ENCODE measurements at regions of chr18 and their contacts with region 1.

Region 1: GRCh38 chr18:71784777-71785176 is 759.4 kb downstream of the CBLN2 start:
- DNase-seq: peak; percentile 51
- H3K4me3 ChIP-seq: no peak overlapping the region
- H3K27ac ChIP-seq: no peak overlapping the region
- H3K4me1 ChIP-seq: no peaks in the 10 kb centered on the region
- H3K27me3 ChIP-seq: no peaks in the 10 kb centered on the region
- CTCF ChIP-seq: peak; percentile 41 to 62
- POLR2A ChIP-seq: no peak

Region 2: GRCh38 chr18:70491734-70492348 is 1292.9 kb before region 1 on chr18:
- CTCF ChIA-PET with region 1: no interaction called
- POLR2A ChIA-PET with region 1: no interaction called
- dilution Hi-C with region 1: no loop called
- intact Hi-C with region 1: loop called (anchors 5 kb)
- DNase-seq: peak; percentile 47
- H3K4me3 ChIP-seq: no peak overlapping the region
- H3K27ac ChIP-seq: no peak overlapping the region
- H3K4me1 ChIP-seq: no peaks in the 10 kb centered on the region
- H3K27me3 ChIP-seq: peaks cover 0 to 4% of the 10 kb centered on the region in 2 experiments
- CTCF ChIP-seq: peak; percentile 71 to 81
- POLR2A ChIP-seq: no peak

Measured in endothelial cell of umbilical vein (primary cell).